B cell (primary cell): ENCODE measurements at regions of chr12 and their contacts with region 1.

Region 1: DNA sequence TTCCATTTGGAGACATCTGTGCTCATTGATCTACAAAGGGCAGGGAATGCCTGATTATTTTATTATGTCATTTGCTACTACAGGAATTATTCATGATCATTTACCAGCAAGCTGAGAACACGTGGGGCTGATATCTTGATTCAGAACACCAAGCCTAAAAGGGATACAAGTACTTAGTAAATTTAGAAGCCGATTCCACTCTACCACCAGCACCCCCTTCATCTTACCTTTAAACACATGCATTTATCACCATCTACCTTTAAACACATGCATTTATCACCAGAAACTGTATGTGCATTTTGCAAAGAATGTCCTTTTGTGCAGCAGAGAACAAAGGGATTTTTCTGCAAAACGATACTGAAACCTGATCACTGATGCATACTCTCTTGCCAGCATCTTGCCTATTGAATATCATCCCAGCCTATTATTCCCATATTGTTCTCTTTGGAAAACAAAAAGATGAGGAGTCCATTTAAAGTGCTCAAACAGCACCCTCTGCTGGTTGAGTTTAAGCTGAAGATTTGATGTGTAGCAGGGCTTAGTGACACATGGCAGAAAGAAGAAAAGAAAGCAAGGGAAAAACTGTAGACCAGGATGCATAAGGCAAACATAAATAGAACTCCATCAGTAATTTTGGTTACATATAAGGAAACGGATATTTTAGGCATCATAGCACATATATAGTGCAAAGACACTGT is 132.6 kb upstream of the PLEKHG7 start:
- DNase-seq: peak; percentile 86
- ATAC-seq: peak; percentile 91
- H3K4me3 ChIP-seq: peak overlapping the region in 3 of 5 experiments; percentile 30 to 55 (median 53)
- H3K4me3 Mint-ChIP-seq: no peak overlapping the region
- H3K27ac ChIP-seq: peak overlapping the region; percentile 29 to 75
- H3K27ac Mint-ChIP-seq: no peak overlapping the region
- H3K4me1 ChIP-seq: peaks cover 23 to 25% of the 10 kb centered on the region in 2 donors
- H3K4me1 Mint-ChIP-seq: peaks cover 26% of the 10 kb centered on the region
- H3K27me3 ChIP-seq: no peaks in the 10 kb centered on the region
- H3K27me3 Mint-ChIP-seq: no peaks in the 10 kb centered on the region
- CTCF ChIP-seq: peak; percentile 99

Region 2: GRCh38 chr12:91811481-91812287 is 758.5 kb before region 1 on chr12:
- CTCF ChIA-PET with region 1: interaction called, 25 read pairs
- POLR2A ChIA-PET with region 1: no interaction called
- intact Hi-C with region 1: loop called (anchors 1 kb)
- DNase-seq: peak; percentile 80
- ATAC-seq: peak; percentile 71
- H3K4me3 ChIP-seq: no peak overlapping the region
- H3K4me3 Mint-ChIP-seq: no peak overlapping the region
- H3K27ac ChIP-seq: no peak overlapping the region
- H3K27ac Mint-ChIP-seq: peak overlapping the region; percentile 43
- H3K4me1 ChIP-seq: peaks cover 0 to 5% of the 10 kb centered on the region in 2 donors
- H3K4me1 Mint-ChIP-seq: peaks cover 4% of the 10 kb centered on the region
- H3K27me3 ChIP-seq: no peaks in the 10 kb centered on the region
- H3K27me3 Mint-ChIP-seq: no peaks in the 10 kb centered on the region
- CTCF ChIP-seq: peak; percentile 90

Region 3: GRCh38 chr12:92059976-92060375 is 510.2 kb before region 1 on chr12:
- CTCF ChIA-PET with region 1: no interaction called
- POLR2A ChIA-PET with region 1: no interaction called
- intact Hi-C with region 1: no loop called
- DNase-seq: no peak
- ATAC-seq: no peak
- H3K4me3 ChIP-seq: no peak overlapping the region
- H3K4me3 Mint-ChIP-seq: peak overlapping the region; percentile 18
- H3K27ac ChIP-seq: no peak overlapping the region
- H3K27ac Mint-ChIP-seq: peak overlapping the region; percentile 10
- H3K4me1 ChIP-seq: peaks cover 37 to 40% of the 10 kb centered on the region in 2 donors
- H3K4me1 Mint-ChIP-seq: peaks cover 57% of the 10 kb centered on the region
- H3K27me3 ChIP-seq: no peaks in the 10 kb centered on the region
- H3K27me3 Mint-ChIP-seq: no peaks in the 10 kb centered on the region
- CTCF ChIP-seq: no peak

Region 4: DNA sequence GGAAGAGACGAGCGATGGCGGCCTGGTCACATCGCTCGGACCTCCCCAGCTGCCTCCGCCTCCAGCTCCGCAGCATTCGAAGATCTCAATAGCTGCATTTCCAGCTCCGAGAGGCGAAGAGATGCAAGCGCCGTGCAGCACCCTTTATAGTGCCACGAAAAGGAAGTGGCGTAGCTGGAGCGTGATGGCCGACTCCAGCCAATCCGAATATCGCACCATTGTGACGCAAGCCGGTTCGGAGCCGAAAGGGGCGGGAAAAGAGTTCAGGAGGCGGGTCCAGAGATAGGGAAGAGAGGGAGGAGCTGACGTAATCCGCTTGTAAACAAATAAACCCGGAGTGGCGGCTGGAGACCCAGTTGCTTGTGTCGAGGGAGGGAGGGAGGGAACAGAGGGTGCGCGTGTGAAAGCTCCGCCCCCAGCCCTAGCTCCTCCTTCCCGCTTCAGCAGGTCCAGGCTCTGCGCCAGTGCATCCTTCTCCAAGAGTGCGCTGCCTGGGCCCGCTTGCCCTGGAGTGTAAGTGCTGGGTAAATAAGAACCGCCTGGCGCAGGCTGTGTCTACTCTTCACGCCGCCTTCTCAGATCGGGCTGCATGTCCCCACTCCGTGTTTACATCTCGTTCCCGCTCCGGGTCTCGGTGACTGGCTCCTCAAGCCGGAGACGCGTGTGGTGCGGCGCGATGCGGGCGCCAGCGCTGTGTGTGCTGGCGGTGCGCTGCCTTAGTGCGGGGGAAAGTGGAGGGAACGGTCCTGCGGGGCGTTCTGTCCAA is 424.3 kb before region 1 on chr12 and contains the start of gene BTG1:
- CTCF ChIA-PET with region 1: interaction called, 52 read pairs
- POLR2A ChIA-PET with region 1: interaction called, 34 read pairs
- intact Hi-C with region 1: loop called (anchors 1 kb)
- DNase-seq: peak; percentile 100
- ATAC-seq: peak; percentile 76
- H3K4me3 ChIP-seq: peak within 1 kb of the TSS; percentile 94 to 100 (median 96)
- H3K4me3 Mint-ChIP-seq: peak within 1 kb of the TSS; percentile 98
- H3K27ac ChIP-seq: peak within 1 kb of the TSS; percentile 87 to 91
- H3K27ac Mint-ChIP-seq: peak within 1 kb of the TSS; percentile 99
- H3K4me1 ChIP-seq: peaks cover 24 to 27% of the 10 kb centered on the region in 2 donors
- H3K4me1 Mint-ChIP-seq: peaks cover 31% of the 10 kb centered on the region
- H3K27me3 ChIP-seq: no peaks in the 10 kb centered on the region
- H3K27me3 Mint-ChIP-seq: no peaks in the 10 kb centered on the region
- CTCF ChIP-seq: no peak
- total RNA-seq, gene BTG1: 733 and 790 TPM in 2 replicates

Region 5: DNA sequence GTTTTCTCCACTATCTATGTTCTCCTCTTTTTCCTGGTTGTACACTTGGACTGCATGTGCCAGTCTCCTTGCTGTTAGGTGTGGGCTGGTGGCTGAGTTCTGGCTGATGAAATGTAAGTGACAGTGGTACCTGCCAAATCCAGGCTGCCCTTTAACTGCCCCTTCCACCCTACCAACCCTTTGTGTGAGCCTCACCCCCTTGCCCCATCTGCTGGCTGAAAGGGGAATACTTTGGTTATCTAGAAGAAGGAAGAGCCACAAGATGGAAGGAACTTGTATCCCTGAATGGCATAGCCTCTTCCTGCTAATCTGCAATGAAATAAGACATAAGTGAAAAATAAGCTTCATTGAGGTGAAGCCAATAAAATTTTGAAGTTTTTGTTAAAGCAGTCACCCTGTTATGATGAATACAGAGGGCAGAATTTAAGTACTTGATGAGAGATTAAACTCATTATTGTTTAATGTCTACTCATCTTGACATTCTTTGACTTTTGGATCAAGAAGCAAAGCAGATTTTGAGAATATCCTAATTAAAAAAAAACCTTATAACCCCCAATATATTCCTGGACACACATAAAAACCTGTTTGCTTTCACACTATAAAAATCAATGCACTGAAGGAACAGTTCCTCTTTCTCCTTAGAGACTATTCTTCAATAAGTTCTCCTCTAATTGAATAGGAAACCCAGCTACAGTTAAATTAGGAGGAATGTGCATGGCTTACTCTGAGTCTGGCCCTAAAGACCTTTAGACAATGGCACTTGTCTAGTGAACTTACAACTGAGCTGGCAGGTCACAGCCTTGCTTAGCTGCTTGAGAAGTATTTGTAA is 161.9 kb before region 1 on chr12:
- CTCF ChIA-PET with region 1: interaction called, 39 read pairs
- POLR2A ChIA-PET with region 1: no interaction called
- intact Hi-C with region 1: loop called (anchors 2 kb)
- DNase-seq: peak; percentile 74
- ATAC-seq: peak; percentile 49
- H3K4me3 ChIP-seq: no peak overlapping the region
- H3K4me3 Mint-ChIP-seq: peak overlapping the region; percentile 0
- H3K27ac ChIP-seq: peak overlapping the region; percentile 40 to 71
- H3K27ac Mint-ChIP-seq: peak overlapping the region; percentile 88
- H3K4me1 ChIP-seq: peaks cover 43% of the 10 kb centered on the region in 2 donors
- H3K4me1 Mint-ChIP-seq: peaks cover 67% of the 10 kb centered on the region
- H3K27me3 ChIP-seq: no peaks in the 10 kb centered on the region
- H3K27me3 Mint-ChIP-seq: no peaks in the 10 kb centered on the region
- CTCF ChIP-seq: peak; percentile 57

Region 6: GRCh38 chr12:92547906-92548305 is 22.3 kb before region 1 on chr12:
- CTCF ChIA-PET with region 1: no interaction called
- POLR2A ChIA-PET with region 1: no interaction called
- intact Hi-C with region 1: no loop called
- DNase-seq: no peak
- ATAC-seq: no peak
- H3K4me3 ChIP-seq: no peak overlapping the region
- H3K4me3 Mint-ChIP-seq: no peak overlapping the region
- H3K27ac ChIP-seq: no peak overlapping the region
- H3K27ac Mint-ChIP-seq: no peak overlapping the region
- H3K4me1 ChIP-seq: peaks cover 30 to 32% of the 10 kb centered on the region in 2 donors
- H3K4me1 Mint-ChIP-seq: peaks cover 16% of the 10 kb centered on the region
- H3K27me3 ChIP-seq: no peaks in the 10 kb centered on the region
- H3K27me3 Mint-ChIP-seq: no peaks in the 10 kb centered on the region
- CTCF ChIP-seq: no peak

Region 7: GRCh38 chr12:92582475-92582874 is 12.3 kb after region 1 on chr12:
- CTCF ChIA-PET with region 1: interaction called, 14 read pairs
- POLR2A ChIA-PET with region 1: no interaction called
- intact Hi-C with region 1: no loop called
- DNase-seq: no peak
- ATAC-seq: no peak
- H3K4me3 ChIP-seq: no peak overlapping the region
- H3K4me3 Mint-ChIP-seq: no peak overlapping the region
- H3K27ac ChIP-seq: no peak overlapping the region
- H3K27ac Mint-ChIP-seq: no peak overlapping the region
- H3K4me1 ChIP-seq: peaks cover 4 to 6% of the 10 kb centered on the region in 2 donors
- H3K4me1 Mint-ChIP-seq: peaks cover 11% of the 10 kb centered on the region
- H3K27me3 ChIP-seq: no peaks in the 10 kb centered on the region
- H3K27me3 Mint-ChIP-seq: no peaks in the 10 kb centered on the region
- CTCF ChIP-seq: no peak